ENCODE measurements at regions of chr2 and their contacts with region 1.

Region 1: DNA sequence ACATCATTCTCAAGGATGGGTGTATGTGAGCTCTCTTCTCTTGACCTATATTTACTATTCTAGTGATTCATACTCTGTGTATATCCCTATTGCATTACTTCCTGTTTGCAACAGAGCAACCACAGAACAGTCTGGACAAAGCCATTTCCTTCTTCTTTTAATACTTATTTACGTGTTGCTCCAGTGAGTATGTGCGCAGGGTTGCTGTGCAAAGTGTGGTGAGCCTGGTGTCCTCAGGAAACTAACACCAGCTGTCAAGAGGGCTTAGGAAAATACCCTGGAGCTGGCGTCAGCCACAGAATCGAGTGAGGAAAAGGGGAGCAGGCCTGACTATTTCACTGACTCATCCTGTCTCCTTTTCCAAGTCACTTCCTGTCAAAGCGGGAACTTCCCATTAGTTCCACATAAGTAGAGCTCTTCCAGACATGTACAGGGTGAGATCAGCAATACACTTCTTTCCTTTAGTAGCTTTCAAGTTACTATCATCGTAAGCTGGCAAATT is 214.1 kb upstream of the COPS8 start:
- DNase-seq: peak; percentile 96
- H3K4me3 ChIP-seq: no peak overlapping the region
- H3K27ac ChIP-seq: peak overlapping the region; percentile 92
- H3K4me1 ChIP-seq: peaks cover 35% of the 10 kb centered on the region
- H3K27me3 ChIP-seq: no peaks in the 10 kb centered on the region
- CTCF ChIP-seq: no peak
- POLR2A ChIP-seq: no peak

Region 2: DNA sequence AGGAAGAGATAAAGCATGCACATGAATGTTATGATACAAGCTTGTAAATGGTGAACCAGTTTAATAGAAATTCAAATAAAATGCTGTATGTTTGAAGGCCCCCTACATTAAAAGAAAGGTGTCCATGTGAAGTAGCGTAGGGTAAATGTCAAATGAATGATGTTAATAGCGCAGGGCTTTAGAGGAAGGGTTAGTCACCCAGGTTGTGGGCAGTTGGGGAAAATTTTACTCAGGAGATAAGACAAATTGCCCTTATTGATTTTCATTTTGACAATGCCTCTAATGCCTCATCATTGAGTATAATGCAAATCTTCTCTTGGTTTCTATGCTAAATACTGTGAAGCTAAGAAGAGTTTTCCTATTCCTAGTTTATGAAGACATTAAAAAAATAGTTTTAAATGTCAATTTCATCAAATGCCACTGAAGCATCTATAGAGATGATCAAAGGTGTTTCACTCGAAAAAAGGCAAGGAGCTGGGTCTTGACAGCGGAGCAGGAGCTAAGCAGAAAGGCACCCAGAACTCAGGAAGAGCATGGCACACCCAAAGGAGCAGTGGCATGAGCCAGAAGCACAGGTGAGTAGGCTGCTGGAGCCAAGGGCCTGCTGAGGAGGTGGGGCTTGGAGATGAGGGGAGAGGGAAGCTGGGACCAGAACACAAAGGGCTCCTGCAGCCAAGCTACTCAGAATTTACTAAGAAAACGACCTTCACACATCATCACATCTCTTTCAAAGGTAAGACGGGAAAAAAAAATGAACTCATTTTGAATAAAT is 431.3 kb before region 1 on chr2:
- CTCF ChIA-PET with region 1: no interaction called
- POLR2A ChIA-PET with region 1: no interaction called
- dilution Hi-C with region 1: no loop called
- intact Hi-C with region 1: no loop called
- DNase-seq: no peak
- H3K4me3 ChIP-seq: no peak overlapping the region
- H3K27ac ChIP-seq: no peak overlapping the region
- H3K4me1 ChIP-seq: no peaks in the 10 kb centered on the region
- H3K27me3 ChIP-seq: no peaks in the 10 kb centered on the region
- CTCF ChIP-seq: no peak
- POLR2A ChIP-seq: no peak

Region 3: GRCh38 chr2:236576087-236576486 is 295.5 kb before region 1 on chr2:
- CTCF ChIA-PET with region 1: no interaction called
- POLR2A ChIA-PET with region 1: no interaction called
- dilution Hi-C with region 1: no loop called
- intact Hi-C with region 1: loop called (anchors 2 kb)
- DNase-seq: peak; percentile 77
- H3K4me3 ChIP-seq: no peak overlapping the region
- H3K27ac ChIP-seq: peak overlapping the region; percentile 9
- H3K4me1 ChIP-seq: peaks cover 59% of the 10 kb centered on the region
- H3K27me3 ChIP-seq: no peaks in the 10 kb centered on the region
- CTCF ChIP-seq: peak; percentile 11 to 48
- POLR2A ChIP-seq: no peak

Region 4: DNA sequence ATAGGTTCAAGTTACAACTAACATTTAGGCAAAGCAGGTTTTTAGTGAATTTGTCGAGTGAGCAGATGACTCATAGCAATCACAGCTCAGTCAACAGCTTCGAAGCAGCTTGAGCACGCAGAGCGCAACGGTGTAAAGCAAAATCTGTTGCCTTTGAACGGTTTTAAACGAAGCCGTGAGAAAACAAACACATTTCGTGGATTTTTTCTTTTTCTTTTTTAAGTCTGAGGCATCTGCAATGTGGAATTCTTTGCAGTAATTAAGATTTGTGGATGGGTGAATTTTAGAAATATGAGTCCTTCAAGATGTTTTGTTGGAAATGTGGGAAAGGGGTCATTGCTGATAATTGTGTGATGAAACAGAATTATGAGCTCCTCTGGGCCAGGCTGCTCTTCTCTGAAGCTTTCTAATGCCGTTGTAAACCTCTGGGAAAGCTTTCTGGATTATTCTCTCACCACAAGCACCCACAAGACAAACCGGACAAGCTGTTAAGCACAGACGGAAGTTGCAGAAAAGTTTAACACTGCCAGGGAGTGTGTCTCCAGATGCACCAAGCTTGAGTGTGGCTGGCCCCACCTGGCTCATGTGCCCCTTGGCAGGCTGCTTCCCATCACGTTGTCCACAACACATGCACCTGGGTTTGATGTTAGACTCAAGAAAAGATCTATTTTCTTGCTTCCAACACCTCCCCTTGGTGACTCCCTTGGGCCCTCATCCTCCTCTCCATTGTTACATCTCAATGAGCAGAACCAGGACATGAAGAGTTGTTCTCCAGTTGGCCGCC is 77.2 kb before region 1 on chr2:
- CTCF ChIA-PET with region 1: no interaction called
- POLR2A ChIA-PET with region 1: no interaction called
- dilution Hi-C with region 1: no loop called
- intact Hi-C with region 1: no loop called
- DNase-seq: no peak
- H3K4me3 ChIP-seq: no peak overlapping the region
- H3K27ac ChIP-seq: no peak overlapping the region
- H3K4me1 ChIP-seq: no peaks in the 10 kb centered on the region
- H3K27me3 ChIP-seq: peaks cover 0 to 11% of the 10 kb centered on the region in 2 experiments
- CTCF ChIP-seq: no peak
- POLR2A ChIP-seq: no peak

Region 5: DNA sequence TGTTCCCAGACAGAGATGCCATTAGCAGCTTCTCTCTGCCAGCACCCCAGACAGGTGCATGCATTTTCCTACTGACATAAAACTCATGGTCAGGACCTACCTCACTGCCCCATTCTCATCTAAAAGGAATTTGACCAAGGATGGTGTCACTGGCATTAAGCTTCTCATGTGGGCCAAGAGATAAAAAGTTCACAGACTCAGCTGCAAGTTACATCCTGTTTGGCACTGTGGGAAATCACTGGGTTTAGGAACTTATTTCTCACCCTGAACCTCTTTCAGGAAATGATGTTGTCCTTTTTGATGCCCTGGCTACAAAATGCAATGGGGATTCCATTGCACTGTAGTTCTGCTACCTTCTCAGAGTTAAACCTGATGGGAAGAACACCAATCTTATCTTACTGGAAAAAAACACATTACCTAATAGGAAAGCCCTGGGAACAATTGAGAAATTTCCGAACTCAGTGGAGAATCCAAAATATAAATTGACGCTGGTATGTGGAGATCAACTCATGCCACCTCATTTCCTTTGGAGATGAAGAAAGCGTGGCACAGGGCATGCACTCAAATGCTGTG is 38.0 kb before region 1 on chr2:
- CTCF ChIA-PET with region 1: interaction called, 4 read pairs
- POLR2A ChIA-PET with region 1: interaction called, 4 read pairs
- dilution Hi-C with region 1: no loop called
- intact Hi-C with region 1: loop called (anchors 1 kb)
- DNase-seq: peak; percentile 95
- H3K4me3 ChIP-seq: no peak overlapping the region
- H3K27ac ChIP-seq: peak overlapping the region; percentile 94
- H3K4me1 ChIP-seq: peaks cover 23% of the 10 kb centered on the region
- H3K27me3 ChIP-seq: no peaks in the 10 kb centered on the region
- CTCF ChIP-seq: no peak
- POLR2A ChIP-seq: no peak

Region 6: DNA sequence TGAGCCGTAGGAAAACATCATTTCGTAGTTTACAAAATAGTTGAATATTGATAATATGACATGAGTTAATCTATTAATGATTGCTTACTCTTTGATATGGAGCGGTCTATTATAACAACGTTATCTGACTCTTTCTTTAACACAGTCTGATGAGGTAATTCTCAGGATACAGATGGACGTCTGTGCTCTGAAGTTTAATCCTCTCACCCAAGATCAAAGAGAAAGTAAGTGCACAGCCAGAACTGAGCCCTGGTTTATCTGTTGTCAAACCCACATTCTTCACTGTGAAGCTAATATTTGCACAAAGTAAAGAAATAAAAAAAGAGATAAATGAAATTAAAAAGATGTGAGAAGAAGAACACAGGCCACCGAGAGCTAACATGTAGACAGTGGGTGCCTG is 23.2 kb after region 1 on chr2:
- CTCF ChIA-PET with region 1: no interaction called
- POLR2A ChIA-PET with region 1: no interaction called
- dilution Hi-C with region 1: no loop called
- intact Hi-C with region 1: no loop called
- DNase-seq: no peak
- H3K4me3 ChIP-seq: no peak overlapping the region
- H3K27ac ChIP-seq: no peak overlapping the region
- H3K4me1 ChIP-seq: peaks cover 4% of the 10 kb centered on the region
- H3K27me3 ChIP-seq: no peaks in the 10 kb centered on the region
- CTCF ChIP-seq: no peak
- POLR2A ChIP-seq: no peak

Region 7: DNA sequence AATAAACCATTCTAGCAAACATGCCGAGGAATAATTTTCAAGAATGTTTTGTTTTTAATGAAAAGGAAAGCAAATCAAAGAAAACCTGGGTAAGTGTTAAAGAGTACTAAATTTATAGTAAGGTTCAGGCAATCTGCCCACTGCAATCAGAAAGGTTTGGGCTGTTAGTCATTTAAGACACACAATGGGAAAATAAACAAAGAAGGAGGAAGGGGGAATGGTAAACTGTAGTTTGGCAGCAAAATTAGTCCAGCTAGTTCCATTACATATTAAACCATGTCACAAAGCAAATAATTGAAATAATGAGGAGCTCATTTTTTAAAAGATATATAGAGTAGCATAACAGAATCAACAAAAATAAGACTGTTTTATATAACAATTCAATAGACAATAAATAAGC is 126.7 kb after region 1 on chr2:
- CTCF ChIA-PET with region 1: interaction called, 3 read pairs
- POLR2A ChIA-PET with region 1: no interaction called
- dilution Hi-C with region 1: no loop called
- intact Hi-C with region 1: loop called (anchors 5 kb)
- DNase-seq: peak; percentile 88
- H3K4me3 ChIP-seq: peak overlapping the region in 1 of 3 experiments; percentile 5
- H3K27ac ChIP-seq: peak overlapping the region; percentile 88
- H3K4me1 ChIP-seq: peaks cover 33% of the 10 kb centered on the region
- H3K27me3 ChIP-seq: no peaks in the 10 kb centered on the region
- CTCF ChIP-seq: no peak
- POLR2A ChIP-seq: no peak

Region 8: DNA sequence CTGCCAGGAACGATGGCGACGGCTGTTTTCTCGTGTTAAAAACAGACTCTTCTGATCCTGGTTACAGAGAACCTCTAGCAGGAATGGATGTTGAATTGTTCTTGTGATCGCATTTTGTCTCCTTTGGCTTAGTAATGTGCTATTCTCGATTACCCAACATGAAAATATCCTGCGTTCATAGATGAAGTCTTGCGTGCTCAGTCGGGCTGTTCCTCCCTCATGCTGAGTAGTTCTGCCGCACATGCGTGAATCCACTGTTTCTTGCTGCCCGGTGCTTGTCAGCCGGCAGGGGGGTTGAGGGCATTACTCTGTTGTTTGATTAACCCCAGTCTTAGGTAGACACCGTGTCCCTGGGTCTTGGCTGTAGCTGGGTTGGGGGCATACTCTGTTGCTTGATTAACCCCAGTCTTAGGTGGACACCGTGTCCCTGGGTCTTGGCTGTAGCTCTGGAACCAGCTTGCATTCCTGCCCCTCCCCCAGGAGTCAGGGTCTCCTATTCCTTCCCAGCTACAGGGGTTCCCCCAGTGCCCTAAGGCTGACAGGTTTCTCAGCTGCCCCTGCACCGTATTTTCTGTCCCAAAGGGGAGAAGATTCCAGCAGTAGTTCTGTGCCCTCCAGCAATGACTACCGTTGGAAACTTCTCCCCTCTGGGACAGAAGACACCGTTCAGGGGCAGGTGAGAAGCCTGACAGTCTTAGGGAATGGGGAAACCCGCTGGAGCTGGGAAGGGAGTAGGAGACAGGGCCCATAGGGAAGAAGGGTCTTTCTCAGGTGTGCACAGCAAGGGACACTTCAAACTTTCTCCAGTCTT is 1533.1 kb after region 1 on chr2:
- CTCF ChIA-PET with region 1: no interaction called
- POLR2A ChIA-PET with region 1: no interaction called
- dilution Hi-C with region 1: no loop called
- intact Hi-C with region 1: loop called (anchors 5 kb)
- DNase-seq: no peak
- H3K4me3 ChIP-seq: no peak overlapping the region
- H3K27ac ChIP-seq: no peak overlapping the region
- H3K4me1 ChIP-seq: no peaks in the 10 kb centered on the region
- H3K27me3 ChIP-seq: no peaks in the 10 kb centered on the region
- CTCF ChIP-seq: no peak
- POLR2A ChIP-seq: no peak